ENCODE measurements at regions of chr1 and their contacts with region 1.

Region 1: DNA sequence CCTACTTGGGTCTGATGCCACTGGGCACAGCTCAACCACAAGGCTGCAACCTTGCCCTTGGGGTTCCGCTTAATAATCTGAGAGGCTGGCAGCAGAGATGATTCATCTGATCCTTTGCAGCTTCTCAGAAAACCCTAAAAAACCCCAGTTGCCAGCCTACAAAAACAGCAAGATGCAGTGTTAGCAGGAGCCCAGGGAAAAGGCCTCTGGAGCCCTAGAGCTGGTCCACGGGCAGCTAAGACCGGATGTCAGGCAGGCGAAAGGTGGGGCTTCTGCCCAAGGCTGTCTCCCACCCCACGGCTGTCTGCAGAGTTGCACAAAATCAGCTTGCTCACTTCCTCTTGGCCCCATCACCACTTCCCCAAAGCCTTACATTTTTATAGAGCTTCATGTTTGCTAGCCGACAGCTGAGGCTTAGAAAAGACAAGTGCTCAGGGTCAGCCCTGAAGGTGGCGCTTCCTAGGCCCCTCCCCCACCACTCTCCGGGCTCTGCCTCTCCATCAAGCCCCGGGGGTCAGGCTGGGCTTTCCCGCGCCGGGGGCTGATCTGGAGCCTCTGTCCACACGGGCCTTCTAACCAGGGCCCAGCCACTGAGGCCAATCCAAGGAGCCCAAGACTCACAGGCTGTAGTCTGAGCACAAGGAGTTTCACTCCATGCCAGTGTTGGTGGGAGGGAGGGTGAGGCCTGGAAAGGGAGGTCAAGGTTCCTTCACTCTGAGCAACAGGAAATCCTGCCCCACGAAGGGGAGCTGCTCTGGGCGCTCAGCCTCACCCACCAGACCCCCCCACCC is 4.2 kb upstream of the ADORA3 start:
- DNase-seq: peak; percentile 83
- ATAC-seq: peak; percentile 76
- H3K4me3 Mint-ChIP-seq: peak overlapping the region; percentile 49
- H3K27ac Mint-ChIP-seq: peak overlapping the region; percentile 94
- H3K4me1 Mint-ChIP-seq: peaks cover 59% of the 10 kb centered on the region
- H3K27me3 Mint-ChIP-seq: no peaks in the 10 kb centered on the region
- CTCF ChIP-seq: no peak

Region 2: GRCh38 chr1:111463029-111463683 is 44.5 kb before region 1 on chr1:
- CTCF ChIA-PET with region 1: interaction called, 12 read pairs
- POLR2A ChIA-PET with region 1: no interaction called
- intact Hi-C with region 1: no loop called
- DNase-seq: no peak
- ATAC-seq: no peak
- H3K4me3 Mint-ChIP-seq: no peak overlapping the region
- H3K27ac Mint-ChIP-seq: peak overlapping the region; percentile 22
- H3K4me1 Mint-ChIP-seq: peaks cover 15% of the 10 kb centered on the region
- H3K27me3 Mint-ChIP-seq: no peaks in the 10 kb centered on the region
- CTCF ChIP-seq: no peak

Region 3: DNA sequence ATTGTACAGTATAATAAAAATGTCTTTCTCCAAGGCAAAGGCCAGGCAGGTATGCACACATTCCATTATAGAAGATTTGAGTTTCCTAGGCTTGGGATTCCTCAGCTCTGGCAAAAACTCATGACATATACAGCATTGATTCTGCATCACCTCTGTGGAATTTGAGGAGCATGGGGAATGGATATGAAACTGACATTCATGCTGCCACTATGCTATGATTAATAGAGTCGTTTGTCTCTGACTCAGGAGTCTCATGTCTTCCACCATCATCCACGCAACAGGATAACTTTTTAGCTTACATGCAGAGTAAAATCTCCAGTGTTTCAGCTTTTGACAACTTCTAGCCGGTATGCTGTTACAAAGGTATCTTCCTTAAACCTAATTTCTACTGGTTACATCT is 45.6 kb after region 1 on chr1:
- CTCF ChIA-PET with region 1: interaction called, 12 read pairs
- POLR2A ChIA-PET with region 1: no interaction called
- intact Hi-C with region 1: no loop called
- DNase-seq: no peak
- ATAC-seq: no peak
- H3K4me3 Mint-ChIP-seq: no peak overlapping the region
- H3K27ac Mint-ChIP-seq: no peak overlapping the region
- H3K4me1 Mint-ChIP-seq: no peaks in the 10 kb centered on the region
- H3K27me3 Mint-ChIP-seq: peaks cover 1% of the 10 kb centered on the region
- CTCF ChIP-seq: no peak

Region 4: GRCh38 chr1:111619635-111620440 is 112.2 kb after region 1 on chr1 and contains the start of gene RAP1A:
- CTCF ChIA-PET with region 1: interaction called, 32 read pairs
- POLR2A ChIA-PET with region 1: interaction called, 5 read pairs
- intact Hi-C with region 1: loop called (anchors 2 kb)
- DNase-seq: peak; percentile 97
- ATAC-seq: peak; percentile 79
- H3K4me3 Mint-ChIP-seq: peak within 1 kb of the TSS; percentile 99
- H3K27ac Mint-ChIP-seq: peak within 1 kb of the TSS; percentile 96
- H3K4me1 Mint-ChIP-seq: peaks cover 63% of the 10 kb centered on the region
- H3K27me3 Mint-ChIP-seq: no peaks in the 10 kb centered on the region
- CTCF ChIP-seq: no peak
- total RNA-seq, gene RAP1A: 197 to 198 TPM

Region 5: GRCh38 chr1:111656086-111657017 is 148.7 kb after region 1 on chr1:
- CTCF ChIA-PET with region 1: interaction called, 16 read pairs
- POLR2A ChIA-PET with region 1: interaction called, 3 read pairs
- intact Hi-C with region 1: loop called (anchors 5 kb)
- DNase-seq: peak; percentile 27
- ATAC-seq: no peak
- H3K4me3 Mint-ChIP-seq: no peak overlapping the region
- H3K27ac Mint-ChIP-seq: no peak overlapping the region
- H3K4me1 Mint-ChIP-seq: peaks cover 53% of the 10 kb centered on the region
- H3K27me3 Mint-ChIP-seq: no peaks in the 10 kb centered on the region
- CTCF ChIP-seq: peak; percentile 56

Region 6: DNA sequence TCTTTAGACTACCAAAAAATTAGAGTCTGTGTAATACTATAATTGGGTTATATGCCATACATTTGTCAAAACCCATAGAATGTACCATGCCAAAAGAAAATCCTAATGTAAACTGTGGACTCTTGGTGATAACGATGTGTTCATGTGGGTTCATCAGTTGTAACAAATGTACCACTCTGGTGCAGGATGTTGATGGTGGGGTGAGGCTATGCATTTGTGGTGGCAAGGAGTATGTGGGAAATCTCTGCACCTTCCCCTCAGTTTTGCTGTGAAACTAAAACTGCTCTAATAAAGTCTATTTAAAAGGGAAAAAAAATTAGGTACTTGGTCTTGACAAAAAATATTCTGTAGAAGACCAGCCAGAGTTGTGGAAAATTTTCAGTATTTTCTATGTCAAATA is 188.2 kb after region 1 on chr1:
- CTCF ChIA-PET with region 1: interaction called, 26 read pairs
- POLR2A ChIA-PET with region 1: no interaction called
- intact Hi-C with region 1: no loop called
- DNase-seq: no peak
- ATAC-seq: no peak
- H3K4me3 Mint-ChIP-seq: no peak overlapping the region
- H3K27ac Mint-ChIP-seq: peak overlapping the region; percentile 55
- H3K4me1 Mint-ChIP-seq: peaks cover 61% of the 10 kb centered on the region
- H3K27me3 Mint-ChIP-seq: no peaks in the 10 kb centered on the region
- CTCF ChIP-seq: no peak

Region 7: GRCh38 chr1:111747282-111747734 is 239.7 kb after region 1 on chr1:
- CTCF ChIA-PET with region 1: interaction called, 43 read pairs
- POLR2A ChIA-PET with region 1: interaction called, 4 read pairs
- intact Hi-C with region 1: no loop called
- DNase-seq: peak; percentile 89
- ATAC-seq: peak; percentile 92
- H3K4me3 Mint-ChIP-seq: no peak overlapping the region
- H3K27ac Mint-ChIP-seq: no peak overlapping the region
- H3K4me1 Mint-ChIP-seq: no peaks in the 10 kb centered on the region
- H3K27me3 Mint-ChIP-seq: peaks cover 6% of the 10 kb centered on the region
- CTCF ChIP-seq: peak; percentile 80

Region 8: DNA sequence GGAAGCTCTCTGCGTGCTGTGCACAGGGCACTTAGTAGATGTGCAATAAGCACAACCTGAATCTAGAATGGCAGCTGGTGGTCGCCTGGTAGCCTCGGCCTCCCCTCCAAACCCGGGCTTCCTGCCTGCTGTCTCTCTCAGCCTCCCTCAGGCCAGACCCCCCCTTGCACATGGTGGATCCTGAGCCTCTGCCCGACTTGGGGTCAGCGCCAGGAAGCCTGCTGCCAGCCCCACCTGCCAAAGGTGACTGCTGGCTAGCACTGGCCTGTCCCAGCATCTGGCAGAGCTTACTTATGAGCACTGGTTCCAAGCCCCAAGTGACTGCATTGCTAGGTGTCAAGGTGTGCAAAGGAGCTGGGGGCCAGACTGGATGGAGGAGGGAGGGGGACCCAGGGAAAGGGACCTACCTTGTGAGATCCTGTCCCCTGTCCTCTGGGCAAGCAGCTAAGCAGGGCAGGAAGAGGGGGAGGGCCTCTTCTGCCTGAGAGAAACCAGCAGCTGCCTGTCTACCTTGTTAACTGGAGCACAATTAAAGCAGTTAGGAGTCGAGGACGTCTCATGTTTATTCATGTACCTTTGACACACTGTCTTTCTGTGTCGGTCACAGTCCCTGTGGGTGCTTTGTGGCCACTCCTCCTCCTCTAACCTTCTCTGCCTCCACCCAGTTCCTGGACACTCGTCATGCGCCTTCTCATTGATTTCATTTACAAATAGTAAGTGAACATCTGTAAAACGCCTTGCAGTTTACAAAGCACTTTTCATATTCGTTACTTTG is 349.0 kb after region 1 on chr1:
- CTCF ChIA-PET with region 1: no interaction called
- POLR2A ChIA-PET with region 1: no interaction called
- intact Hi-C with region 1: no loop called
- DNase-seq: no peak
- ATAC-seq: no peak
- H3K4me3 Mint-ChIP-seq: no peak overlapping the region
- H3K27ac Mint-ChIP-seq: no peak overlapping the region
- H3K4me1 Mint-ChIP-seq: no peaks in the 10 kb centered on the region
- H3K27me3 Mint-ChIP-seq: peaks cover 14% of the 10 kb centered on the region
- CTCF ChIP-seq: no peak

Measured in activated CD8-positive, alpha-beta T cell treated with anti-CD3 and anti-CD28 coated beads for 36 hours (primary cell).